Naive thymus-derived CD4-positive, alpha-beta T cell (primary cell): ENCODE measurements at regions of chr19 and their contacts with region 1.

Region 1: GRCh38 chr19:48674921-48675824 is 2.4 kb upstream of the NTN5 start:
- DNase-seq: peak; percentile 57 to 81 (median 72)
- ATAC-seq: peak; percentile 94
- H3K4me3 ChIP-seq: no peak overlapping the region
- H3K4me3 Mint-ChIP-seq: peak overlapping the region in 1 of 10 donors; percentile 47
- H3K27ac ChIP-seq: no peak overlapping the region
- H3K27ac Mint-ChIP-seq: peak overlapping the region in 7 of 9 donors; percentile 11 to 79 (median 49)
- H3K4me1 ChIP-seq: peaks cover 6 to 7% of the 10 kb centered on the region in 2 donors
- H3K4me1 Mint-ChIP-seq: peaks cover 3 to 8% (median 7%) of the 10 kb centered on the region in 7 donors
- H3K27me3 ChIP-seq: no peaks in the 10 kb centered on the region
- H3K27me3 Mint-ChIP-seq: no peaks in the 10 kb centered on the region

Region 2: DNA sequence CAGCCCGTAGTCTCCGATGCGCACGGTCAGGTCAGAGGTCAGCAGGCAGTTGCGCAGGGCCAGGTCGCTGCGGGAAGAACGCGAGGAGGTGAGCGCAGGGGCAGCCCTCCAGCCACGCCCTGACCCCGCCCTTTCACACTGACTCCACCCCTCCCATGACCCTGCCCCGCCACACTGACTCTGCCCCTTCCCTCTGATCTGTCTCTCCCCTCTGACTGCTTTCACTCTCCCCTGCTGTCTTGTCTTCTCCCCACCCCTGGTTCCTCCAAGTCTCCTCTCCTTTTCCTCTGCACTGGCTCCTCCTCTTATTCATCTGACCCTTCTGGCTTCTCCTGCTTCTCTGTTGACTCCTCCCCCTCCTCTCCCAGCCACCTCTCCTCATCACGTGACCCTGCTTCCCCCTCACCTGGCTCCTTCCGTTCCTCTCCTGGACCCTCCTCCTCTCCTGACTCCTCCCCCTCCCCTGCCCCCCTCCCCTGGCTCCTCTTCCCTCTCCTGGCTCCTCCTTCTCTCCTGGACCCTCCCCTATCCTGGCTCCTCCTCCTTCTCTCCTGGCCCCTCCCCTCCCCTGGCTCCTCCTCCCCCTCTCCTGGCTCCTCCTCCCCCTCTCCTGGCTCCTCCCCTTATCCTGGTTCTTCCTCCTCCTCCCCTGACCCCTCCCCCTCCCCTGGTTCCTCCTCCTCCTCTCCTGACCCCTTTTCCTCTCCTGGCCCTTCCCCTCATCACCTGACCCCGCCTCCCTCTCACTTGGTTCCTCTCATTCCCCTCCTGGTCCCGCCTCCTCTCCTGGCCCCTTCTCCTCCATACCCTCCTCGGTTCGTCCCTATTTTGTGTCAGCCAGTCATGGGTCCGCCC is 173.4 kb before region 1 on chr19:
- CTCF ChIA-PET with region 1: no interaction called
- POLR2A ChIA-PET with region 1: no interaction called
- intact Hi-C with region 1: loop called in 1 of 2 experiments (anchors 1 kb)
- DNase-seq: peak in 8 of 9 donors; percentile 64 to 89 (median 79)
- ATAC-seq: peak; percentile 83
- H3K4me3 ChIP-seq: peak overlapping the region; percentile 37
- H3K4me3 Mint-ChIP-seq: peak overlapping the region; percentile 70 to 86 (median 80)
- H3K27ac ChIP-seq: peak overlapping the region; percentile 60
- H3K27ac Mint-ChIP-seq: peak overlapping the region; percentile 59 to 95 (median 84)
- H3K4me1 ChIP-seq: peaks cover 0 to 15% of the 10 kb centered on the region in 2 donors
- H3K4me1 Mint-ChIP-seq: peaks cover 0 to 29% (median 19%) of the 10 kb centered on the region in 7 donors
- H3K27me3 ChIP-seq: no peaks in the 10 kb centered on the region
- H3K27me3 Mint-ChIP-seq: peaks cover 0 to 9% (median 0%) of the 10 kb centered on the region in 5 donors

Region 3: DNA sequence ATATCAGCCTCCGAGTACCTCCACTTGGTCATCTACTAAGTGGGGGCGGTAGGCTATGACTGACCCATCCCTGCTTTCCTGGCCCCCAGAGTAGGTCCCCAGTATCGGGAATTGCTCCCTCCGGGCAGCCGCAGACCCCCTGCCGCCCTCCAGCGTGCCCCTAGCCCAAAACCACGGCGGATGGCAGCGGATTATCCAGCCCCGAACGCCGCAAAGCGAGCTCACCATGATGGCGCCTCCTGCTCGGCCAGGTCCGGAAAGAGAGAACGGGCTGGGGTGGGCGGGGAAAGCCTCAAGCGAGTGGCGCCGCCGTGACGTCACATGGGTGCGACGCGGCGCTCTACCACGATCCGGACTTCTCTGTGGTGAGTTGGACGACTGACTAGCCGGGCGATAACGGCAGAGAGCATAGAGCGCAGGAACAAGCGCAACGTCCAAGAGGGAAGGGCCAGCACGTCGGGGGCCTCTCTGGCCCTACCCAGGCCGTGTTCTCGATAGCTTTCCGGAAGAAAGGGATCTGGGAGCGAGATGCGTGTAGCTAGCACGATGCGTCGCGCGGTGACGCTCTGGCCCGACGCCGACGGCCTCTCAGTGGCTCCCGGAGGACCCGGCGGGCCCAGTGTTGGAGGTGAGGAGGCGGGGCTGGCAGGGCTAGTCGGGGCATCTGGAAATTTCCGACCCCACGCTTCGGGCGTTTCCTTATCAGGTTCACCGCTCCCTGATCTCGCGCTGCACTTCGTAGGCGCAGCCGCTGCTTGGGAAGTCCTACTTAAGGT is 56.1 kb before region 1 on chr19 and contains the starts of genes RPL18 and SPHK2:
- CTCF ChIA-PET with region 1: no interaction called
- POLR2A ChIA-PET with region 1: interaction called, 3 read pairs
- intact Hi-C with region 1: loop called in 1 of 2 experiments (anchors 2 kb)
- DNase-seq: peak; percentile 89 to 97 (median 95)
- ATAC-seq: peak; percentile 89
- H3K4me3 ChIP-seq: peak within 1 kb of the TSS; percentile 96
- H3K4me3 Mint-ChIP-seq: peak within 1 kb of the TSS; percentile 88 to 99 (median 96)
- H3K27ac ChIP-seq: peak within 1 kb of the TSS; percentile 95
- H3K27ac Mint-ChIP-seq: peak within 1 kb of the TSS; percentile 96 to 99 (median 98)
- H3K4me1 ChIP-seq: peaks cover 26 to 45% of the 10 kb centered on the region in 2 donors
- H3K4me1 Mint-ChIP-seq: peaks cover 40 to 64% (median 54%) of the 10 kb centered on the region in 7 donors
- H3K27me3 ChIP-seq: no peaks in the 10 kb centered on the region
- H3K27me3 Mint-ChIP-seq: no peaks in the 10 kb centered on the region
- total RNA-seq, gene RPL18: 1,570 to 2,826 (median 2,745) TPM
- total RNA-seq, gene SPHK2: 20.1 to 34.7 (median 30.5) TPM

Region 4: GRCh38 chr19:48660854-48661731 is 14.1 kb before region 1 on chr19:
- CTCF ChIA-PET with region 1: interaction called, 4 read pairs
- POLR2A ChIA-PET with region 1: interaction called, 7 read pairs
- intact Hi-C with region 1: loop called in 1 of 2 experiments (anchors 2 kb)
- DNase-seq: peak; percentile 51 to 90 (median 86)
- ATAC-seq: peak; percentile 95
- H3K4me3 ChIP-seq: peak overlapping the region; percentile 28
- H3K4me3 Mint-ChIP-seq: peak overlapping the region; percentile 63 to 86 (median 80)
- H3K27ac ChIP-seq: peak overlapping the region; percentile 72
- H3K27ac Mint-ChIP-seq: peak overlapping the region; percentile 17 to 98 (median 94)
- H3K4me1 ChIP-seq: peaks cover 6 to 9% of the 10 kb centered on the region in 2 donors
- H3K4me1 Mint-ChIP-seq: peaks cover 7 to 16% (median 10%) of the 10 kb centered on the region in 7 donors
- H3K27me3 ChIP-seq: no peaks in the 10 kb centered on the region
- H3K27me3 Mint-ChIP-seq: peaks cover 0 to 11% (median 0%) of the 10 kb centered on the region in 5 donors

Region 5: GRCh38 chr19:48698046-48698445 is 22.9 kb after region 1 on chr19:
- CTCF ChIA-PET with region 1: interaction called, 8 read pairs
- POLR2A ChIA-PET with region 1: no interaction called
- intact Hi-C with region 1: loop called in 1 of 2 experiments (anchors 1 kb)
- DNase-seq: no peak
- ATAC-seq: no peak
- H3K4me3 ChIP-seq: no peak overlapping the region
- H3K4me3 Mint-ChIP-seq: no peak overlapping the region
- H3K27ac ChIP-seq: no peak overlapping the region
- H3K27ac Mint-ChIP-seq: no peak overlapping the region
- H3K4me1 ChIP-seq: peaks cover 0 to 6% of the 10 kb centered on the region in 2 donors
- H3K4me1 Mint-ChIP-seq: peaks cover 7 to 18% (median 11%) of the 10 kb centered on the region in 7 donors
- H3K27me3 ChIP-seq: no peaks in the 10 kb centered on the region
- H3K27me3 Mint-ChIP-seq: peaks cover 0 to 21% (median 10%) of the 10 kb centered on the region in 5 donors

Region 6: DNA sequence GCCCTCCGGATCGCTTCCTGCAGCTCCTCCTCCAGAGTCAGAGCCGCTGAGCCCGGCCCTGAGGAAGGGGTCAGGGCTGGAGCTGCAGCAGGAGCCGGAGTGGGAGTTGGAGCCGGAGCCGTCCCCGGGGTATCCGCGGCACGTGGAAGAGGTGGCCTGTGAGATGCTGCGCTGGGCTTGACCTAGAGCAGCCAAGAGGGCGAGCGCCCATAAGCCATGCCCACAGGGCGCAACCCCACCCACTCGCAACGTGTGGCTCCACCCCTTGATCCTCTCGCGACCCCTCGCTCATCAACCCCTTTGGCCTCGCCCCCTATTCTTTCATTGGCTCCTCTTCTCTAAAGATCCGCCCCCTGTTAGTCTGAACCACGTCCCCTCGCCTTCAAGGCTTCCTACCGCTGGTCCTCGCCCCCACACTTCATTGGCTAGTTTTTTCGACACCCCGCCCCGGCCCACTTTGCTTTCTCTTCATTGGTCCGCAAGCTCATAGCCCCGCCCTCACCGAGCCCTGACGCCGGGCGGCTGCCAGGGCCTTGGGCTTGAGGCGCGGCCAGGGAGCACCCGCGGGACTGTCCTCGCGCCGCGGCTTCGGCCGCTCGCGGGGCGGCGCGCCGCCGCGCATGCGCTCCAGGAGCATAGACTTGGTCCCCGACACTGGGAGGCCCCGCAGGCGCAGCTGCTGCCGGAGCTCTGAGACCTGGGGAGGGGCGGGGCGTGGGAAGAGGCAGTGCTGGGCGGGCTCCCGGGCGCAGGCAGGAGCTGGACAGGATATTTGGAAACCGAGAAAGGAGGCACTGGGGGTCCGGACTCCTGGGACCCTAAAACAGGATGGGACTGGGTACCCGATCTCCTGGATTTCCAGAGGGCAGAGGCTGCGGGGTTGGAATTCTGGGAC is 38.9 kb after region 1 on chr19:
- CTCF ChIA-PET with region 1: no interaction called
- POLR2A ChIA-PET with region 1: no interaction called
- intact Hi-C with region 1: loop called in 1 of 2 experiments (anchors 1 kb)
- DNase-seq: peak; percentile 92 to 97 (median 97)
- ATAC-seq: peak; percentile 96
- H3K4me3 ChIP-seq: peak overlapping the region; percentile 95
- H3K4me3 Mint-ChIP-seq: peak overlapping the region; percentile 82 to 92 (median 88)
- H3K27ac ChIP-seq: peak overlapping the region; percentile 79
- H3K27ac Mint-ChIP-seq: peak overlapping the region; percentile 16 to 90 (median 81)
- H3K4me1 ChIP-seq: peaks cover 11 to 12% of the 10 kb centered on the region in 2 donors
- H3K4me1 Mint-ChIP-seq: peaks cover 9 to 24% (median 20%) of the 10 kb centered on the region in 7 donors
- H3K27me3 ChIP-seq: no peaks in the 10 kb centered on the region
- H3K27me3 Mint-ChIP-seq: no peaks in the 10 kb centered on the region

Region 7: GRCh38 chr19:48724796-48725753 is 49.9 kb after region 1 on chr19:
- CTCF ChIA-PET with region 1: no interaction called
- POLR2A ChIA-PET with region 1: no interaction called
- intact Hi-C with region 1: no loop called
- DNase-seq: peak in 7 of 9 donors; percentile 60 to 78 (median 72)
- ATAC-seq: peak; percentile 61
- H3K4me3 ChIP-seq: no peak overlapping the region
- H3K4me3 Mint-ChIP-seq: peak overlapping the region; percentile 52 to 85 (median 70)
- H3K27ac ChIP-seq: peak overlapping the region; percentile 39
- H3K27ac Mint-ChIP-seq: peak overlapping the region; percentile 91 to 97 (median 93)
- H3K4me1 ChIP-seq: peaks cover 5 to 27% of the 10 kb centered on the region in 2 donors
- H3K4me1 Mint-ChIP-seq: peaks cover 28 to 45% (median 37%) of the 10 kb centered on the region in 7 donors
- H3K27me3 ChIP-seq: no peaks in the 10 kb centered on the region
- H3K27me3 Mint-ChIP-seq: no peaks in the 10 kb centered on the region